Transverse colon (tissue), 4 donors: ENCODE measurements at regions of chr16 and their contacts with region 1.

Region 1: GRCh38 chr16:14176668-14177067 is 105.5 kb downstream of the MRTFB start:
- DNase-seq: no peak
- H3K4me3 ChIP-seq: no peak overlapping the region
- H3K27ac ChIP-seq: no peak overlapping the region
- H3K4me1 ChIP-seq: no peaks in the 10 kb centered on the region
- H3K27me3 ChIP-seq: no peaks in the 10 kb centered on the region
- CTCF ChIP-seq: no peak
- EP300 ChIP-seq: no peak
- POLR2A ChIP-seq: no peak

Region 2: GRCh38 chr16:14199624-14200023 is 23.0 kb after region 1 on chr16:
- in situ Hi-C with region 1: no loop called
- intact Hi-C with region 1: loop called (anchors 2 kb)
- DNase-seq: no peak
- H3K4me3 ChIP-seq: no peak overlapping the region
- H3K27ac ChIP-seq: no peak overlapping the region
- H3K4me1 ChIP-seq: peaks cover 3 to 16% (median 12%) of the 10 kb centered on the region in 4 donors
- H3K27me3 ChIP-seq: no peaks in the 10 kb centered on the region
- CTCF ChIP-seq: no peak
- EP300 ChIP-seq: no peak
- POLR2A ChIP-seq: no peak

Region 3: DNA sequence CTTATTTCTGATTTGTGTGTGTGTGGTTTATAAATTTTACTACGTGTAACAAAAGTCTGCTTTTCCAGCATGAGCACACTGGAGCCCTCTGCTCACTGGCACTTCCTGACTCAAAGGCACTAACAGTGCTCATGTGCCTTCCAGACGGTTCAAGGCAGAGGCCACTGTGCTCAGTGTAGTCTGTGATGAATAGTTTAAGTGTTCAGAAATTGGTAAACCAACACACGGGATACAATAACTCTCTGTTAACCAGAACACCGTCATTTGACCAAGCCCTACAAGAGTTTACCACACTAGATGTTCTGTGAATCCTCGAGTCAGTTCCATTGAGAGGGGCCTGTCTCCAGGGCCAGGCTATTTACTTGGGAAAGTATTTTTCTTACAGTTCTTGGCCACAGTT is 86.3 kb after region 1 on chr16:
- in situ Hi-C with region 1: no loop called
- intact Hi-C with region 1: no loop called
- DNase-seq: no peak
- H3K4me3 ChIP-seq: no peak overlapping the region
- H3K27ac ChIP-seq: no peak overlapping the region
- H3K4me1 ChIP-seq: no peaks in the 10 kb centered on the region
- H3K27me3 ChIP-seq: no peaks in the 10 kb centered on the region
- CTCF ChIP-seq: no peak
- EP300 ChIP-seq: no peak
- POLR2A ChIP-seq: no peak